ENCODE measurements at regions of chr11 and their contacts with region 1.

Region 1: GRCh38 chr11:6603287-6604080 is at the starts of genes ILK and RRP8:
- DNase-seq: peak; percentile 90 to 95 (median 93)
- H3K4me3 ChIP-seq: peak within 1 kb of the TSS; percentile 48 to 95 (median 88)
- H3K27ac ChIP-seq: peak within 1 kb of the TSS; percentile 34 to 98 (median 90)
- H3K4me1 ChIP-seq: peaks cover 34 to 55% of the 10 kb centered on the region in 2 donors
- H3K27me3 ChIP-seq: no peaks in the 10 kb centered on the region
- CTCF ChIP-seq: peak in 5 of 6 experiments; percentile 8 to 37 (median 18)
- POLR2A ChIP-seq: peak; percentile 69 to 78
- total RNA-seq, gene ILK: 99.1 to 191 (median 153) TPM
- total RNA-seq, gene RRP8: 9.4 to 27.5 (median 20.0) TPM

Region 2: GRCh38 chr11:6389921-6390724 is 213.4 kb before region 1 on chr11 and contains the start of gene SMPD1:
- intact Hi-C with region 1: no loop called
- DNase-seq: peak; percentile 93 to 98 (median 96)
- H3K4me3 ChIP-seq: peak within 1 kb of the TSS in 3 of 4 donors; percentile 79 to 94 (median 86)
- H3K27ac ChIP-seq: peak within 1 kb of the TSS in 4 of 5 donors; percentile 71 to 96 (median 90)
- H3K4me1 ChIP-seq: peaks cover 14 to 18% of the 10 kb centered on the region in 2 donors
- H3K27me3 ChIP-seq: no peaks in the 10 kb centered on the region
- CTCF ChIP-seq: no peak
- POLR2A ChIP-seq: peak; percentile 37 to 92
- total RNA-seq, gene SMPD1: 35.8 to 85.0 (median 67.4) TPM

Region 3: GRCh38 chr11:6682936-6683861 is 79.7 kb after region 1 on chr11 and contains the start of gene MRPL17:
- intact Hi-C with region 1: loop called in 1 of 2 experiments (anchors 5 kb)
- DNase-seq: peak; percentile 99 to 100 (median 99)
- H3K4me3 ChIP-seq: peak within 1 kb of the TSS; percentile 52 to 91 (median 63)
- H3K27ac ChIP-seq: peak within 1 kb of the TSS; percentile 62 to 93 (median 92)
- H3K4me1 ChIP-seq: peaks cover 6 to 15% of the 10 kb centered on the region in 2 donors
- H3K27me3 ChIP-seq: no peaks in the 10 kb centered on the region
- CTCF ChIP-seq: peak; percentile 87 to 97 (median 92)
- POLR2A ChIP-seq: peak; percentile 46 to 86
- total RNA-seq, gene MRPL17: 51.2 to 532 (median 79.8) TPM